ENCODE measurements at regions of chr1 and their contacts with region 1.

Region 1: DNA sequence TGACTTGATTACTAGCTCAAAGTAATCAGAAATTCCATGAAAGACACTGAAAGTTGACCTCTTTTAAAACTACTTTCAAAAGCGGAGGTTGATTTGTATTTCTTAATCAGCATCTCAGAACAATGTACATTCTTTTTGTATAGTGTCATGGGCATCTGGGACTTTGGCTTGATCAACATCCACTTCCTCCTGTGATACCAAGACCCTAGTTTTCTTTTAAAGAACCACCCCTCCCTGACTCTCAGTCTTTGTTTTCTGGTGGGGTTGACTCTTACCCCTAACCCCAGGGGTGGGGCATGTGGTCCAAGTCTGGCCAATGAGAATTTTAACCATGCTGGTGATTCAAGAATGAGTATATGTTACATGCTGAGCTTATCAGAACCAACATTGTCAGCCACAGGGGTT is 21.7 kb upstream of the IRF2BP2 start:
- DNase-seq: peak; percentile 75
- H3K4me3 Mint-ChIP-seq: no peak overlapping the region
- H3K27ac Mint-ChIP-seq: peak overlapping the region; percentile 78
- H3K4me1 Mint-ChIP-seq: peaks cover 27% of the 10 kb centered on the region
- H3K27me3 Mint-ChIP-seq: no peaks in the 10 kb centered on the region
- CTCF ChIP-seq: no peak

Region 2: GRCh38 chr1:234617131-234617985 is 14.4 kb before region 1 on chr1:
- CTCF ChIA-PET with region 1: interaction called, 10 read pairs
- POLR2A ChIA-PET with region 1: interaction called, 307 read pairs
- intact Hi-C with region 1: loop called (anchors 1 kb)
- DNase-seq: peak; percentile 80
- H3K4me3 Mint-ChIP-seq: no peak overlapping the region
- H3K27ac Mint-ChIP-seq: peak overlapping the region; percentile 99
- H3K4me1 Mint-ChIP-seq: peaks cover 70% of the 10 kb centered on the region
- H3K27me3 Mint-ChIP-seq: no peaks in the 10 kb centered on the region
- CTCF ChIP-seq: peak; percentile 28

Region 3: DNA sequence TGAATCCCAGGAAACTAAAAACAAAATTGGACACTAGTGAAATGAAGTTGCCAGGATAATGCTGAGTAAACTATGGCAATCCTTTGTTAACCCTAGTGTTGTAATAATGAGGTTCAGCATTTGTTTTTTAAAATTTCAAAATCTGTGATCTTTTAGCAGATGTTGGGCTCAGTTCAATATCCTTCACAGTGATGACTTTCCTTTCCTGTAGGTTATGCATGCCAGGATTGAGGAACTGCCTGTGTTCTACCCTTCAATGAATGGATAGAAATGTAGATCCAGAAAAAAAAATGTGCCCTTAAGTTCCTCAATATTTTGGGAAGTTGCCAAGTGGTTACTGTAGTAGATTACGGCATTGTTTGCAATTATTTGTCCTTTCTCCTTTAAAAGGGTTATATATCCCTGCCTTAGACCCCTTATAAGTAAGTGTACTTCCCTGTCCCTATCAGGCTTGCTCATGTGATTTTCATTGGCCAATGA is 13.8 kb after region 1 on chr1:
- CTCF ChIA-PET with region 1: interaction called, 4 read pairs
- POLR2A ChIA-PET with region 1: interaction called, 24 read pairs
- intact Hi-C with region 1: loop called (anchors 1 kb)
- DNase-seq: no peak
- H3K4me3 Mint-ChIP-seq: no peak overlapping the region
- H3K27ac Mint-ChIP-seq: no peak overlapping the region
- H3K4me1 Mint-ChIP-seq: peaks cover 16% of the 10 kb centered on the region
- H3K27me3 Mint-ChIP-seq: no peaks in the 10 kb centered on the region
- CTCF ChIP-seq: no peak

Region 4: DNA sequence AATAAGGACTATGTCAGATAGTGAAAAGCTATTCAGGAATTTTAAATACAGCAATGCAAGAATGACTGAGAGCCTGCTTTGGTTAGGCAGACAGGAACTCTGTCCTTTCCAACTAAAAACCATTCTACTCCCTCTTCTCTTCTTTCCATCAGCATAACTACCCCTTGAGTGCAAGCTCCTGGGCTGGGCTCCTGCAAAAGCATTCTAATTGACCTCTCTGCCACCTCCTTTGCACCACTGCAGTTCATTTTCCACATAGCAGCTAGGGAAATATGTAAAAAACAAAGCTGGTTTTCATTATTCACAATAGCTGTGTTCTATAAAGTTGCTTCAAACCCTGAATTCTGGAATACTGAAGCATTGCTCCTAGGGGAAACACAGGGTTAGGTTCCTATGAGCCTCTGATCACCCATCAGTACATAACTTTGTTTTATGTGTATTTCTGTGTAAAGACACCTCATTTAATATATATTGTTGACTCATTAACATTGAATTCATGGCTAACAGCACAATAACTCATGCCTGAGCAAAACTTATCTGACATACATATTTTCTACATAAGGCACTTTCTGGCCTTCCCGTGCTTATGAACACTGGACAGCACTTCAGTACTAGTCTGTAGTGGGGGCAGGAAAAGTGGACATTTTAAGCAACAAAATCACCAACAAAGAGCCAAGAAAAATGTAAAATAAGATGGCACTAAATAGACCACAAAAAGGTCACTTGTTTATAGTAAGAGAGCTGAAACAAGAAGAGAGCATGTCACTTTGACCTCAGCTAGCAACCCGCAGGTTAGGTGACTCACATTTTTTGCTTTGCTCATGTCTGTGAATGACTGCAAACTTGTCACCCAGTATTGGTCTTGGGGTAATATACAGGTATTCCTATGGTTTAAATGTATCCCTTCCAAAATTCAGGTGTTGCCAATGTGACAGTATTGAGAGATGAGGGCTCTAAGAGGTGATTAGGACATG is 36.2 kb after region 1 on chr1:
- CTCF ChIA-PET with region 1: no interaction called
- POLR2A ChIA-PET with region 1: no interaction called
- intact Hi-C with region 1: no loop called
- DNase-seq: no peak
- H3K4me3 Mint-ChIP-seq: no peak overlapping the region
- H3K27ac Mint-ChIP-seq: no peak overlapping the region
- H3K4me1 Mint-ChIP-seq: no peaks in the 10 kb centered on the region
- H3K27me3 Mint-ChIP-seq: no peaks in the 10 kb centered on the region
- CTCF ChIP-seq: no peak